Dorsolateral prefrontal cortex (tissue), 120 donors: ENCODE measurements at regions of chr2 and their contacts with region 1.

Region 1: DNA sequence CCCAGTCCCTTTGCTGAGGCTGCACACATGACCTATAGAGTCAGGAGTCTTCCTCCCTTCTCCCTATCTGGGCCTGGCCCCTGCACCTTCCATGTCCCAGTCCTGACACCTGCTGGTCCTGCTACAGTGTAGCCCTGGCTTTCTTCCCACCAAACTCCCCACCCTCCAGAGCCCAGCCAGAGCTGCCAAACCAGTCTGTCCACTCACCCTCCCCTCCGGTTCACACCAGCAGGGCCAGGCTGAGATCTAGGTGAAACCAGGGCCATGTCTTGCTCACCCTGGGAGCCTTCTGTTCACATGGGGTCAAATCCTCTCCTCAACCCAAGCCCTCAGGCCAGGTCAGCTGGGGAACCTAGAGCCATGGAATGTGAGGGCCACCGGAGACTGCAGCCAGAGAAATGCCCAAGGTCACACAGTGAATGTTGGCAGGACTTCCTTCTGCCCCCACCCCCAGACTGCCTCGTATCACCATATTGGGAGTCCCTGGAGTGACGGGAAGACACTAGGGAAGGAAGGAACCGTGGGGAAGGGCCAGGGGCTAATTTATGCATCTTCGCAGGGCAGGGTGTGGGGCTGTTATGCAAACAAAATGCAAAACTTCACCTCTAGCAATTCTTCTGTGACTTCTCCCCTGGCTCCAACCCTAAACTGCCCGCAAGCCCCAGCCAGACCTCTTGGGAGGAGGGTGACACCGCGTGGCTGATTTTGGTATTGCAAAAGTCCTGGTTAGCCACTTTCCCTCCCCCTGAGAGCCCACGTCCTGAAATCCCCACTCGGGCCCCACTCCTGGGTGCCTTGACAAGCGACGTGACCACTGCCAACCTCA is 14.6 kb downstream of the TNS1 start:
- DNase-seq: peak; percentile 37 to 84 (median 80)
- H3K4me3 ChIP-seq: peak overlapping the region in 6 of 59 donors; percentile 10 to 36 (median 24)
- H3K27ac ChIP-seq: peak overlapping the region in 11 of 59 donors; percentile 10 to 53 (median 26)
- H3K27me3 ChIP-seq: no peaks in the 10 kb centered on the region
- CTCF ChIP-seq: peak; percentile 72 to 97 (median 90)

Region 2: GRCh38 chr2:217934321-217935131 is 53.7 kb before region 1 on chr2:
- intact Hi-C with region 1: loop called in 1 of 2 experiments (anchors 10 kb)
- DNase-seq: peak in 5 of 10 donors; percentile 41 to 75 (median 62)
- H3K4me3 ChIP-seq: peak overlapping the region in 18 of 59 donors; percentile 0 to 37 (median 12)
- H3K27ac ChIP-seq: peak overlapping the region in 50 of 59 donors; percentile 1 to 84 (median 60)
- H3K27me3 ChIP-seq: no peaks in the 10 kb centered on the region
- CTCF ChIP-seq: no peak

Region 3: GRCh38 chr2:217943446-217944389 is 44.5 kb before region 1 on chr2:
- intact Hi-C with region 1: loop called (anchors 1 to 10 kb)
- DNase-seq: peak; percentile 23 to 88 (median 78)
- H3K4me3 ChIP-seq: peak overlapping the region; percentile 45 to 88 (median 68)
- H3K27ac ChIP-seq: peak overlapping the region in 57 of 59 donors; percentile 10 to 91 (median 80)
- H3K27me3 ChIP-seq: no peaks in the 10 kb centered on the region
- CTCF ChIP-seq: peak in 52 of 56 donors; percentile 16 to 76 (median 52)